ENCODE measurements at regions of chr3 and their contacts with region 1.

Region 1: GRCh38 chr3:123559040-123559861 is 25.6 kb downstream of the HACD2 start:
- DNase-seq: peak; percentile 11
- ATAC-seq: no peak
- H3K4me3 Mint-ChIP-seq: no peak overlapping the region
- H3K27ac Mint-ChIP-seq: no peak overlapping the region
- H3K4me1 Mint-ChIP-seq: peaks cover 11% of the 10 kb centered on the region
- H3K27me3 Mint-ChIP-seq: no peaks in the 10 kb centered on the region
- CTCF ChIP-seq: peak; percentile 89

Region 2: DNA sequence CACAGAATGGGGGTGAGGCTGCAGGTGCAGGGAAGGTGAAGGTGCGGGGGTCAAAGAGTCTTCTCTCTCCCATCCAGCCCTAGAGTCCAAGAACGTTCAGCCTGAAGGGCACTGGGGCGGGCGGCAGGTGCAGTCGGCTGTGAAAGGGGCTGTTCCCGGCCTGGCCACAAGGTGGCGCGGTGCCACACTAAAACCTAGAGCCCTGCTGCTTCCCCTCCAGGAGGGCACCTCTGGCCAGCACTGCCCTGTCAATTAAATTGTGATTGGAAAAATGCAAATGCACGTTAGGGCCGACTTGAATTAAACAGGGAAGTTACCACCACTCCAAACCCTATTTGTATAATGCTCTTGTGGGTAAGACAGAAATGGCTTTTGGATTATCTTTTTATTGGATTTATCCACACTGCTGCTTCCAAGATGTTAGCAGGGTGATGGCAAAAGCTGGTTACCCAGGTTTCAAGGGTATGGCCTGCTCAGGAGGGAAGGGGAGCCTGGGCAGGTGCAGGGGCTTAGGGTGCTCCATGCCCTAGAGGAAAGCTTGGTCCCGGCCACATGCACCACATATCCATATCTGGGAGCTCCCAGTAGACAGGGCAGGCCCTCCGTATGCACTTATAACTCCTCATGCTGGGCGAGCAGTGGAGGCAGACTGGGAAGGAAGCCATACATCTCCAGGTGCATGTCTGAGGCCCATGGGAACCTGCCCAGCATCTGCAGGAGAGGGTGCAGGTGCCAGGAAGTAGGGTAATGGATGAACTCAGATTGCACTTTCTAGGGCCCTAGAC is 230.2 kb before region 1 on chr3:
- CTCF ChIA-PET with region 1: interaction called, 18 read pairs
- POLR2A ChIA-PET with region 1: no interaction called
- intact Hi-C with region 1: loop called (anchors 2 kb)
- DNase-seq: peak; percentile 83
- ATAC-seq: peak; percentile 93
- H3K4me3 Mint-ChIP-seq: no peak overlapping the region
- H3K27ac Mint-ChIP-seq: no peak overlapping the region
- H3K4me1 Mint-ChIP-seq: no peaks in the 10 kb centered on the region
- H3K27me3 Mint-ChIP-seq: peaks cover 2% of the 10 kb centered on the region
- CTCF ChIP-seq: peak; percentile 91

Region 3: GRCh38 chr3:123449102-123449996 is 109.9 kb before region 1 on chr3:
- CTCF ChIA-PET with region 1: interaction called, 29 read pairs
- POLR2A ChIA-PET with region 1: no interaction called
- intact Hi-C with region 1: no loop called
- DNase-seq: peak; percentile 10
- ATAC-seq: peak; percentile 49
- H3K4me3 Mint-ChIP-seq: no peak overlapping the region
- H3K27ac Mint-ChIP-seq: no peak overlapping the region
- H3K4me1 Mint-ChIP-seq: peaks cover 4% of the 10 kb centered on the region
- H3K27me3 Mint-ChIP-seq: peaks cover 35% of the 10 kb centered on the region
- CTCF ChIP-seq: no peak

Region 4: GRCh38 chr3:123489400-123490004 is 69.7 kb before region 1 on chr3:
- CTCF ChIA-PET with region 1: interaction called, 20 read pairs
- POLR2A ChIA-PET with region 1: no interaction called
- intact Hi-C with region 1: no loop called
- DNase-seq: peak; percentile 66
- ATAC-seq: peak; percentile 64
- H3K4me3 Mint-ChIP-seq: no peak overlapping the region
- H3K27ac Mint-ChIP-seq: no peak overlapping the region
- H3K4me1 Mint-ChIP-seq: peaks cover 7% of the 10 kb centered on the region
- H3K27me3 Mint-ChIP-seq: no peaks in the 10 kb centered on the region
- CTCF ChIP-seq: peak; percentile 86

Region 5: GRCh38 chr3:123536153-123536895 is 22.9 kb before region 1 on chr3:
- CTCF ChIA-PET with region 1: interaction called, 12 read pairs
- POLR2A ChIA-PET with region 1: no interaction called
- intact Hi-C with region 1: no loop called
- DNase-seq: no peak
- ATAC-seq: peak; percentile 62
- H3K4me3 Mint-ChIP-seq: no peak overlapping the region
- H3K27ac Mint-ChIP-seq: no peak overlapping the region
- H3K4me1 Mint-ChIP-seq: peaks cover 19% of the 10 kb centered on the region
- H3K27me3 Mint-ChIP-seq: no peaks in the 10 kb centered on the region
- CTCF ChIP-seq: no peak

Region 6: GRCh38 chr3:123546133-123546755 is 13.0 kb before region 1 on chr3:
- CTCF ChIA-PET with region 1: interaction called, 57 read pairs
- POLR2A ChIA-PET with region 1: no interaction called
- intact Hi-C with region 1: no loop called
- DNase-seq: no peak
- ATAC-seq: no peak
- H3K4me3 Mint-ChIP-seq: no peak overlapping the region
- H3K27ac Mint-ChIP-seq: no peak overlapping the region
- H3K4me1 Mint-ChIP-seq: peaks cover 8% of the 10 kb centered on the region
- H3K27me3 Mint-ChIP-seq: no peaks in the 10 kb centered on the region
- CTCF ChIP-seq: no peak

Region 7: GRCh38 chr3:123576122-123576521 is 16.9 kb after region 1 on chr3:
- CTCF ChIA-PET with region 1: interaction called, 37 read pairs
- POLR2A ChIA-PET with region 1: interaction called, 4 read pairs
- intact Hi-C with region 1: no loop called
- DNase-seq: peak; percentile 70
- ATAC-seq: peak; percentile 82
- H3K4me3 Mint-ChIP-seq: no peak overlapping the region
- H3K27ac Mint-ChIP-seq: peak overlapping the region; percentile 78
- H3K4me1 Mint-ChIP-seq: peaks cover 37% of the 10 kb centered on the region
- H3K27me3 Mint-ChIP-seq: no peaks in the 10 kb centered on the region
- CTCF ChIP-seq: no peak

Region 8: DNA sequence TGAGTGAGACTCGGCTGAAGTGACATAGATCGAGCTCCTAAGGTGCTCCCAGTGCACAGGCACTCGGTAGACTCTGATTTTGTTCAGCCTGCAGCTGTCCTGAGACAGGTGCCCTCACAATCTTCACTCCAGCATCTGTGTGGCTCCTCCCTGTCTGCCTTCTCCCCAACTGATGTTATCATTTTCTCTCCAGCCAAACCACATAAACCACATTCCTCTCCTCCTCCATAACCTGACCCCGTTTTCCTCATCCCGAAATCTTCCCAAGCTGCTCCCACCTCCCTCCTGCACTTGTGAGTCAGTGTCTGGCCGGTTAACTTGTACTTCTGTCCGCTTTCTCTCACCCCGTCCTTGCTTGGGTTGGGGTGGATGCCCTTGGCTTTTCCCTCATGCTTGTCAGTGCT is 118.9 kb after region 1 on chr3:
- CTCF ChIA-PET with region 1: no interaction called
- POLR2A ChIA-PET with region 1: no interaction called
- intact Hi-C with region 1: no loop called
- DNase-seq: no peak
- ATAC-seq: no peak
- H3K4me3 Mint-ChIP-seq: no peak overlapping the region
- H3K27ac Mint-ChIP-seq: no peak overlapping the region
- H3K4me1 Mint-ChIP-seq: no peaks in the 10 kb centered on the region
- H3K27me3 Mint-ChIP-seq: peaks cover 6% of the 10 kb centered on the region
- CTCF ChIP-seq: no peak

Region 9: GRCh38 chr3:123799544-123800361 is 240.5 kb after region 1 on chr3:
- CTCF ChIA-PET with region 1: no interaction called
- POLR2A ChIA-PET with region 1: no interaction called
- intact Hi-C with region 1: no loop called
- DNase-seq: no peak
- ATAC-seq: no peak
- H3K4me3 Mint-ChIP-seq: no peak overlapping the region
- H3K27ac Mint-ChIP-seq: no peak overlapping the region
- H3K4me1 Mint-ChIP-seq: no peaks in the 10 kb centered on the region
- H3K27me3 Mint-ChIP-seq: peaks cover 3% of the 10 kb centered on the region
- CTCF ChIP-seq: no peak

Measured in activated CD8-positive, alpha-beta T cell treated with anti-CD3 and anti-CD28 coated beads for 36 hours (primary cell).